OCI-LY7 (cell line): ENCODE measurements at regions of chr11 and their contacts with region 1.

Region 1: DNA sequence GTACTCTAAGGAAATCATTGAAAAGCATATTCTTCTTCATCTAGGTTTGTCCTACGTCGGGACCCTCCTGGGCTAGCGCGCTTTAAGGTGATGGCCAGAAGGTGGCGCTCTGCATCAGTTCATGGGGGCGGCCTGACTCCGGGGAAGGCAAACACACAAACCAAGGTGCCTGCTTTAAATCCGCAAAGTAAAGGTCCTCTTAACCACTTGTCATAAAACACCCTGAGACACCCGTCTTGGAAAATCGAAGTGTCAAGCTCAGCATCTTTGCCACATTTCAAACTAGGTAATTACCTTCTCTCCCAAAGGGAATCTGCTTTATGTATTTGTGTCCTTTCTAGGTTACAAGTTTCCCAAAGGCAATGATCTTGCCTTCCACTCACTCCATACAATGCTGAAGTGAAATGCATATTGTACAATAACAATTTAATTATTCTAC is 33.9 kb downstream of the LMO2 start:
- DNase-seq: peak; percentile 72
- H3K4me3 ChIP-seq: no peak overlapping the region
- H3K27ac ChIP-seq: no peak overlapping the region
- H3K4me1 ChIP-seq: no peaks in the 10 kb centered on the region
- CTCF ChIP-seq: peak; percentile 99

Region 2: GRCh38 chr11:32312206-32312817 is 1545.6 kb before region 1 on chr11:
- CTCF ChIA-PET with region 1: no interaction called
- POLR2A ChIA-PET with region 1: no interaction called
- intact Hi-C with region 1: no loop called
- DNase-seq: no peak
- H3K4me3 ChIP-seq: no peak overlapping the region
- H3K27ac ChIP-seq: no peak overlapping the region
- H3K4me1 ChIP-seq: no peaks in the 10 kb centered on the region
- CTCF ChIP-seq: no peak

Region 3: GRCh38 chr11:33700425-33701271 is 157.3 kb before region 1 on chr11 and contains the start of gene C11orf91:
- CTCF ChIA-PET with region 1: no interaction called
- POLR2A ChIA-PET with region 1: no interaction called
- intact Hi-C with region 1: no loop called
- DNase-seq: peak; percentile 96
- H3K4me3 ChIP-seq: peak within 1 kb of the TSS; percentile 75
- H3K27ac ChIP-seq: no peak within 1 kb of the TSS
- H3K4me1 ChIP-seq: peaks cover 18% of the 10 kb centered on the region
- CTCF ChIP-seq: no peak
- total RNA-seq, gene C11orf91: not detected in 2 replicates

Region 4: DNA sequence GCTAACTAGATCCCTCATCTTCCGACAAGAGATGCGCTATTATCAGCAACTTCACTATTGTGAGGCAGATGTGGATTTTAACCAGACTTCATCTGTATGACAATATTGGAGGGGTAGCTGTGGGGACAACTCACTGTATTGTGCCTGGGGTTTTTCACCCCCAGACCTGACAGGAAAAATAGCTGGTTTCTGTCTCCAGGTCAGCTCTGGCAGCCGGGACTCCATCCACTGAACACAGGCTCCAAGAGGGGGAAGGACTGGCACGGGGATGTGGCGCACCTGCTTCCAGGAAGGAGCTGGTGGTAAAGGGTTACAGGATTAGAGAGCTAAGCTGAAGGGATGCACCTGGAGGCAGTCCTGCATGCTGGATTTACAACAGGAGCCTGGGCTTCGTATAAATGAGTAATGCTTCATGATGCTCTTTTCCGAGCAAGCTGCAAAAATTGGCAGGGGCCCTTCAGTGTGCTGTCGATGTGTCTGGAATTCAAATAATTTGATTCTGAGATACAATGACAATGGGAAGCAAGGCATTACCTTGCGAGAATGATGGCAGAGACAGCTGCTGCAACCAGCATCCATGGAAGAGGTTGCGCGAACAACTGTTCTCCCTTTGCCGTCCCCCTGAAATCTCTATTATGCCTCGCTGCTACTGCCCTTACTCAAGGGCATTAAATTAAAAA is 15.6 kb before region 1 on chr11:
- CTCF ChIA-PET with region 1: no interaction called
- POLR2A ChIA-PET with region 1: no interaction called
- intact Hi-C with region 1: no loop called
- DNase-seq: no peak
- H3K4me3 ChIP-seq: no peak overlapping the region
- H3K27ac ChIP-seq: no peak overlapping the region
- H3K4me1 ChIP-seq: no peaks in the 10 kb centered on the region
- CTCF ChIP-seq: no peak

Region 5: DNA sequence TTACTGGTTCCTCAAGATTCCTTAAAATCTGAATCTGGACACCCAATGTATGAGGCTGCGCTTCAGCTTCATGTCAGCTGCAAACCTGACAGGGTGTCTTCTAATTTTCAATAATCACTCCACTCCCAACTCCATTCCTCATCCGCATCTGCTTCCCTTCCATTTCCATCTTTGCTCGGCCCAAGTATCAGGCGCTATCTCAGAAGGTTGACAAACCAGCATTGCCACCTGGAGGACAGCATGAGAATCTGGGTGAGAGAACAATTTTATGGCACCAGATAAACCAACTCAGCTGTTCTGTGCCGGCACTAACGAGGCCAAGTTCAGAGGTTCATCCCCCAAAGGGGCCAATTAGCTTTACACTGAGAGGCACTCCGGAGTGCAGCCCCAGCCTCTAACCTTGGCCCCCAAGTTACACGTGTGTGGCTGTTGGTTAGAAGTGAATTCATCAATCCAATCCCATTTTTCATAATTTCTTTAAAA is 113.1 kb after region 1 on chr11:
- CTCF ChIA-PET with region 1: interaction called, 3 read pairs
- POLR2A ChIA-PET with region 1: interaction called, 3 read pairs
- intact Hi-C with region 1: loop called (anchors 1 kb)
- DNase-seq: peak; percentile 43
- H3K4me3 ChIP-seq: no peak overlapping the region
- H3K27ac ChIP-seq: no peak overlapping the region
- H3K4me1 ChIP-seq: no peaks in the 10 kb centered on the region
- CTCF ChIP-seq: peak; percentile 78

Region 6: GRCh38 chr11:33987975-33988580 is 130.1 kb after region 1 on chr11:
- CTCF ChIA-PET with region 1: no interaction called
- POLR2A ChIA-PET with region 1: no interaction called
- intact Hi-C with region 1: loop called (anchors 1 kb)
- DNase-seq: peak; percentile 84
- H3K4me3 ChIP-seq: no peak overlapping the region
- H3K27ac ChIP-seq: no peak overlapping the region
- H3K4me1 ChIP-seq: no peaks in the 10 kb centered on the region
- CTCF ChIP-seq: peak; percentile 89